ENCODE measurements at regions of chr2 and their contacts with region 1.

Region 1: DNA sequence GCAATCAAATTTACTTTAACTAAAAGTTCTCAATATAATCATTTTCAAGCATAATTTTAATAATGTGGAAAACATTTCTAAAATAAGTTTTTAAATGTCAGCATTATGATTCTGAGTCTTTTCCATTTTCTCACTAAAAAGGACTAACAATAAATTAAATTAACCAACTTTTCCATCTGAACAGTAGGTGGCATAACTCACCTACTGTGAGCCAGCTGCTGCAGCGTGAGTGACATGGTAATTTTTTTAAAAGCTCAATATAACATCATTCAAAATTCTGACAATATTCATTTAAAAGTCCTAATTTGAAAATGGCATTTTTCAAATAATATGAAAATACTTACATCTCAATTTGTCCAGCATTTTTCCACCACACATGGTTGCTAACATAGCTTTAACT is 66.5 kb downstream of the DTNB start:
- DNase-seq: no peak
- H3K4me3 ChIP-seq: no peak overlapping the region
- H3K27ac ChIP-seq: no peak overlapping the region
- H3K4me1 ChIP-seq: no peaks in the 10 kb centered on the region
- H3K27me3 ChIP-seq: no peaks in the 10 kb centered on the region
- CTCF ChIP-seq: peak; percentile 91

Region 2: GRCh38 chr2:25618642-25619037 is 11.7 kb after region 1 on chr2:
- CTCF ChIA-PET with region 1: interaction called, 10 read pairs
- POLR2A ChIA-PET with region 1: no interaction called
- intact Hi-C with region 1: no loop called
- DNase-seq: peak in 1 of 2 experiments; percentile 94
- H3K4me3 ChIP-seq: no peak overlapping the region
- H3K27ac ChIP-seq: peak overlapping the region; percentile 62
- H3K4me1 ChIP-seq: peaks cover 25% of the 10 kb centered on the region
- H3K27me3 ChIP-seq: no peaks in the 10 kb centered on the region
- CTCF ChIP-seq: no peak

Region 3: GRCh38 chr2:25664183-25664964 is 57.5 kb after region 1 on chr2:
- CTCF ChIA-PET with region 1: interaction called, 25 read pairs
- POLR2A ChIA-PET with region 1: interaction called, 5 read pairs
- intact Hi-C with region 1: loop called (anchors 1 kb)
- DNase-seq: peak; percentile 63 to 84
- H3K4me3 ChIP-seq: peak overlapping the region; percentile 32
- H3K27ac ChIP-seq: peak overlapping the region; percentile 70
- H3K4me1 ChIP-seq: peaks cover 37% of the 10 kb centered on the region
- H3K27me3 ChIP-seq: no peaks in the 10 kb centered on the region
- CTCF ChIP-seq: peak; percentile 78

Region 4: DNA sequence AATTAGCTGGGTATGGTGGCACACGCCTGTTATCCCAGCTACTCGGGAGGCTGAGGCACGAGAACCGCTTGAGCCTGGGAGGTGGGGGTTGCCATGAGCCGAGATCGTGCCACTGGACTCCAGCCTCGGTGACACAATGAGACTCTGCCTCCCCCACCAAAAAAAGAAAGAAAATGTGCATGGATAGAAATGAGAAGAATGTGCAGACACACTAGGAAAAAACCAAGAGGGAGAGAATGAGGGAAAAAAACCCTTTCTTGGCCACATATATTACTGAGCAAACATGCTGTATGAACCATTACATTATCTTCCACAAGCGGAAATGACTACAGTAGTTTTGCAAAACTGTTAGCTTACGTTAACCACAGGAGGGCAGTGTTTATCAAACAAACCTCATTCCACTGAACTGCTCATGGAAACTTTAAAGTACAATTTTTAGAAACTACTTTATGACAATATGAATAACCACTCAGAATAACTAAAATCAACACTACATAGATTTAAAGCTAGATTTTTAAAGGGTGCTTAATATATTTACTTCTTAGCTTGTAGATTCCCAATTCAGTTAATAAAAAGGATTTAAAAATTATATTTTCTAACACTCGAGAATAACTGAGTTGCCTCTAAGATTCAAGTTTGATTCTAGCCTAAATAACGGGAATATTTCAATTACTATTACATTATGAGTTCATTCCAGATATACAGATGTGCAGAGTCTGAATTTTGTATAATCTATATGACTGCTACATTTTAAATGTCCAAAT is 245.0 kb after region 1 on chr2:
- CTCF ChIA-PET with region 1: interaction called, 5 read pairs
- POLR2A ChIA-PET with region 1: no interaction called
- intact Hi-C with region 1: loop called (anchors 2 kb)
- DNase-seq: peak; percentile 22 to 75
- H3K4me3 ChIP-seq: no peak overlapping the region
- H3K27ac ChIP-seq: peak overlapping the region; percentile 5; the same call in 1 of the 2 replicates
- H3K4me1 ChIP-seq: peaks cover 11% of the 10 kb centered on the region
- H3K27me3 ChIP-seq: no peaks in the 10 kb centered on the region
- CTCF ChIP-seq: peak; percentile 85